Vagina (tissue), 2 donors: ENCODE measurements at regions of chr2 and their contacts with region 1.

Region 1: GRCh38 chr2:65177751-65178442 is 48.0 kb upstream of the RAB1A start:
- DNase-seq: no peak
- H3K4me3 ChIP-seq: no peak overlapping the region
- H3K27ac ChIP-seq: no peak overlapping the region
- H3K4me1 ChIP-seq: no peaks in the 10 kb centered on the region
- H3K27me3 ChIP-seq: no peaks in the 10 kb centered on the region
- CTCF ChIP-seq: no peak
- POLR2A ChIP-seq: no peak

Region 2: DNA sequence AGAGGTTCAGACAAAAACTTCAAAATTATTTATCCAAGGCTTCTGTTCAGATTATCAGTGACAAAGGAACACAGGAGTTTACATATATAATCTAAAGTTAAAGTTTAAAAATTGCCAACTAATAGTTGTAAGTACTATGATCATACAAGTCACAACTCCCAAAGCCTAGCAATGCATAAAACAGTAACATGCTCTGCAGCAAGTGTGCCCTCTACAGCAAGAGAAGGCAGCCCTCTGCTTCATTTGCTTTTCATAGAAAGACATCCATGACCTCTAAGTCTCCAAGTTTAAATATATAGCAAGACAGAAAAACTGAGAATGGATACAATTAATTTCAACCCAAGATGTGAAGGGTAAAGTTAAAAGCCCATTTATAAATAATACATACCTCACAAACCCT is 61.3 kb before region 1 on chr2:
- intact Hi-C with region 1: loop called (anchors 2 kb)
- DNase-seq: no peak
- H3K4me3 ChIP-seq: no peak overlapping the region
- H3K27ac ChIP-seq: no peak overlapping the region
- H3K4me1 ChIP-seq: peaks cover 92% of the 10 kb centered on the region
- H3K27me3 ChIP-seq: no peaks in the 10 kb centered on the region
- CTCF ChIP-seq: no peak
- POLR2A ChIP-seq: no peak